ENCODE measurements at regions of chr16 and their contacts with region 1.

Region 1: DNA sequence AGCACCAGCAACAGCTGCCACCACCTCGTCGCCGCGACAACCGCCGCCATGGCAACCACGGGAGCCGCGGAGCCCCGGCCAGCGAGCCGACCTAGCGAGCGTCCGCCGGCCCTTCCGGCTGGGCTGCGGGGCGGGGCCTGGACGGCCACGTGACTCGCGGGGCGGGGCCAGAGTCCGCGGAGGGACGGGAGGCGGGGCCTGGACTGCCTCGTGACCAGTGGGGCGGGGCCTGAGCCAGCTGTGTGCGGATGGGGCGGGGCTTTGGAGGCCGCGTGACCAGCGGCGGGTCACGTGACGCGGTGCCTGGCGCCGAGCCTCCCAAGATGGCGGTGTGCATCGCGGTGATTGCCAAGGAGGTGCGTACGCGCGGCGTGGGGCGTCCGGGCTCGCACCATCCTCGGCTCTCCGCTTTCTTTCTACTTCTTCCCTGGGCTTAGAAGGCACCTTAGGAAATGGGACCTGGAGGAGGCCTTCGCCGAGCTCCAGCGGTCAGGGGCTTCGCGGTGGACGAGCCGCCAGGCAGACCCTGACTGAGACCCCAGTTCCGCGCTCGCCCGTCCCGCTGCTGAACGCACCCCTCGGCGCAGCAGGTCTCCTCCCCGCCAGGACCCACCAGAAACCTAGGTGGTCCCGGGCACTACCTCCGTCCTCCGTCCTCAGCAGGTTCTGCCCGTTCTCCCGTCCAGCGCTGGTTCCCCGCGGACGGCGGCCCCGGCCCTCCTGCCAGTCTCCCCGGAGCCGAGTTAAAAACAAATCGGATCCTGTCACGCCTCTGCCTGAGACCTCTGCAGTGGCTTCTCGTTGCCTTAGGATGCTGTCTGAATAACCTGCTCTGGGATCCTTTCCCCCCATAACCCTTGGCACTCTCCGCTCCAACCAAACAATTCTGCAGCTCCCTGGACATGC is at the starts of genes GALNS and TRAPPC2L:
- DNase-seq: peak; percentile 99
- ATAC-seq: peak; percentile 88
- H3K4me3 Mint-ChIP-seq: peak within 1 kb of the TSS; percentile 92
- H3K27ac Mint-ChIP-seq: peak within 1 kb of the TSS; percentile 86
- H3K4me1 Mint-ChIP-seq: peaks cover 39% of the 10 kb centered on the region
- H3K27me3 Mint-ChIP-seq: no peaks in the 10 kb centered on the region
- CTCF ChIP-seq: no peak
- total RNA-seq, gene GALNS: 39.9 and 48.3 TPM in 2 replicates
- total RNA-seq, gene TRAPPC2L: 38.7 and 54.8 TPM in 2 replicates

Region 2: DNA sequence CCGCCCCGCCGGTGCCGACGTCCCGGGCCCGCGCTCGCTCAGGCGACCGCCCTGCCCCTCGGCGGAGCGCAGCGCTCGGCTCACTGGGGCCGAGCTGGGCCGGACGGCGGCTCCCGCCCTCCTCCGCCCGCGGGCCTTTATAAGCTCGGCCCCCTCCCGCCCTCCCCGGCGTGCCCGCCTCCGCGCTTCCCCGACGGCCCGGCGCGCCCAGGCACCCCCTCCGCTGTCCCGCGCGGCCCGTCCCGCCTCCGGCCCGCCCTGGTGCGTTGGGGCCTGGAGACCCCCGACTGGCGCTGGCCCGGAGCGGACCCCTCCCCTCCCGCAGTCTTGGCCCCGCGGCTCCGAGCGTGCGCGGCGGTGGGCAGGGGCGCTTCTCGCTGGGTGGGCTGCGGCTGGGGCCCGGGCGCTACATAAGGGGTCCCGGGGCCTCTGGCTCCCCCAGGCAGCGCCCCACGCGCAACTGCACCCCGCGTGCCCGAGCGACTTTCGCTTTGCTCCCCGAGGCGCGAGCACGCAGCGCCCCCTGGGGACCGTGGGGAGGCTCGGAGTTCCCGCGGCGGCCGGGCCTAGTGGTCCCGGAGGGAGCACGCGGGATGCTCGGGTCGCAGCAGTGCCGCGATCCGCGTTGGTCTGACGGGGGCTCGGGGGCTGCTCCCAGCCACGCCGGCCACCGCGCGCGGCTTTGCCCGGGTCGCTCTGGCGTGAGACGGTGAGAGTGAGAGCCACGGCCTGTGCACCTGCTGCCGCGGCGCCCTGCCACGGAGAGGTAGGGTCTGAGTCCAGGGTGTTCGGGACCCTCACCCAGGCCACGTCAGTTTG is 71.8 kb before region 1 on chr16 and contains the start of gene PIEZO1:
- CTCF ChIA-PET with region 1: interaction called, 4 read pairs
- POLR2A ChIA-PET with region 1: interaction called, 6 read pairs
- intact Hi-C with region 1: loop called (anchors 1 kb)
- DNase-seq: peak; percentile 78
- ATAC-seq: peak; percentile 28
- H3K4me3 Mint-ChIP-seq: peak within 1 kb of the TSS; percentile 85
- H3K27ac Mint-ChIP-seq: peak within 1 kb of the TSS; percentile 76
- H3K4me1 Mint-ChIP-seq: peaks cover 47% of the 10 kb centered on the region
- H3K27me3 Mint-ChIP-seq: no peaks in the 10 kb centered on the region
- CTCF ChIP-seq: no peak
- total RNA-seq, gene PIEZO1: 75.2 and 85.9 TPM in 2 replicates

Region 3: DNA sequence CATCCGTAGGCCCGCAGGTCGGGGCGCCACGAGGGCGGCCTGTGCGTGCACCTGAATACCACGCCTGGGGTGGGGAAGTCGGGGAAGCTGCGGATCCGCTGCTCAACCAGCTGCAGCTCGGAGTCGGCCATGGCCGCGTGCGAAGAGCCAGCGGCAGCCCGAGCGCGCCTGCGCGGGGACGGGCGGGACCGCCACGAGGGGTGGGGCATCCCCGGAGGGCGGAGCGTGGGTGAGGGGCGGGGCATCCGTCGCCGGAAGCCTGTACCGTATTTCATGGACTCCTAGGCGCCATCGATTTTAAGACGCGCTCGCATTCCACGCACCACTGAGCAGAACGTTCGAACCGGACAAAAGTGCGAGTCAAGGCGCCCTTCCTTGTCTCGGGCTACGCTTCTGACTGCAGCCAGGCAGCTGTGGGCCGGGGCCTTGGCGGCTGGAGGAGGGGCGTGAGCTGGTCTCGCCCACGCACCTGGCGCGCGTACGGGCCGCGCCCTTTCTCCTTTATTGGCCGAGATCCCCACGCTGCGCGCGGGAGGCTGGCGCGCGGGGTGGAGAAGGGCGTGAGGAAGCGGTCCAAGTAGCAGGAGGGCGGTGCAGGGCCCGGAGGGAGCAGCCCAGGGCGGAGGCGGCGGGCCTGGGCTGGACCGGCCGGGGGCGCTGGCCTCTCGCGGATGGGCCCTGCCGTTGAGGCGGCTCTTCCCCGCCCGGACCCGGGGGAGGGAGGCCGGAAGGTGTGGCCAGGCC is 45.1 kb before region 1 on chr16 and contains the start of gene APRT:
- CTCF ChIA-PET with region 1: interaction called, 15 read pairs
- POLR2A ChIA-PET with region 1: interaction called, 39 read pairs
- intact Hi-C with region 1: loop called (anchors 1 kb)
- DNase-seq: peak; percentile 99
- ATAC-seq: peak; percentile 86
- H3K4me3 Mint-ChIP-seq: peak within 1 kb of the TSS; percentile 91
- H3K27ac Mint-ChIP-seq: peak within 1 kb of the TSS; percentile 97
- H3K4me1 Mint-ChIP-seq: peaks cover 17% of the 10 kb centered on the region
- H3K27me3 Mint-ChIP-seq: no peaks in the 10 kb centered on the region
- CTCF ChIP-seq: no peak
- total RNA-seq, gene APRT: 198 and 209 TPM in 2 replicates

Region 4: GRCh38 chr16:88925101-88925887 is 68.2 kb after region 1 on chr16:
- CTCF ChIA-PET with region 1: no interaction called
- POLR2A ChIA-PET with region 1: interaction called, 5 read pairs
- intact Hi-C with region 1: loop called (anchors 1 kb)
- DNase-seq: peak; percentile 70
- ATAC-seq: peak; percentile 96
- H3K4me3 Mint-ChIP-seq: no peak overlapping the region
- H3K27ac Mint-ChIP-seq: peak overlapping the region; percentile 24
- H3K4me1 Mint-ChIP-seq: peaks cover 63% of the 10 kb centered on the region
- H3K27me3 Mint-ChIP-seq: no peaks in the 10 kb centered on the region
- CTCF ChIP-seq: no peak

Region 5: DNA sequence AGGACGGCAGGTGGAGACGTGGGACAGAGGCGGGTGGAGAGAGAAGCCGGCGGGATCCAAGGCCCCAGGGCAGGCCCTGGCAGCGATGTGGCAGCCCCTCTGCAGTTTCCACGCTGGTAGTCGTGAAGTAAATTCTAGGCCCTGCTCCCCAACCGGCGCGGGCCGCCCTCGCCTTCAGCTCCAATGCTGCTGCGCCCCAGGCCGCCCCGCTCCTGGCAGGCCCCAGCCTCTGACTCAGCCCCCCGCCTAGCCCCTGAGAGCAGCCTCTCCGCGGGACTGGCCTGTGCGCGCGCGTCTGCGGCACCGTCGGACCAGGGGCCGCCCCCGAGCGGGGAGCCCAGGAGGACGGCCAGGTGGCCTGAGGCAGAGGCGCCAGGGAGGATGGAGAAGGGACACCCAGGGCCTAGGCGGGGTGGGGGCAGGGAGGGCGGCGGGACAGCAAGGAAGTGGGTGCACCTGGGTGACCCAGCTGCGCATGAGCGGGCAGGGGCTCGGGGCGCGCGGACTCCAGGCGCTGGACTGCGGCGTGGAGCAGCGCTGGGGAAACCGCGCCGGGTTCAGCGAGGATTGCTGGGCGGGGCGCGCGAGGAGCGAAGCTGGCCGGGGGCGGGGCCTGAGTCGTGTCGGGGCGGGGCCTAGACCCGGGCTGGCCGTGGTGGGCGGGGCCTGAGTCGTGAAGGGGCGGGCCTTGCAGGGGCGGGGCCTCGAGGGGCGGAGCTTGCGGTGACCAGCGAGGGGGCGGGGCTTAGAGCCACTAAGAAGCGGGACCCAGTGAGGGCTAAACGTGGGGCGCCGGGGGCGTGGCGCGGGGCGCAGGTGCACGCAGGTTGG is 390.0 kb after region 1 on chr16:
- CTCF ChIA-PET with region 1: no interaction called
- POLR2A ChIA-PET with region 1: no interaction called
- intact Hi-C with region 1: loop called (anchors 1 kb)
- DNase-seq: peak; percentile 92
- ATAC-seq: peak; percentile 97
- H3K4me3 Mint-ChIP-seq: peak overlapping the region; percentile 72
- H3K27ac Mint-ChIP-seq: no peak overlapping the region
- H3K4me1 Mint-ChIP-seq: peaks cover 13% of the 10 kb centered on the region
- H3K27me3 Mint-ChIP-seq: no peaks in the 10 kb centered on the region
- CTCF ChIP-seq: no peak

Measured in activated B cell treated with CpG ODN at 0.5 μM for 24 hours (primary cell).